ENCODE measurements at regions of chr7 and their contacts with region 1.

Region 1: DNA sequence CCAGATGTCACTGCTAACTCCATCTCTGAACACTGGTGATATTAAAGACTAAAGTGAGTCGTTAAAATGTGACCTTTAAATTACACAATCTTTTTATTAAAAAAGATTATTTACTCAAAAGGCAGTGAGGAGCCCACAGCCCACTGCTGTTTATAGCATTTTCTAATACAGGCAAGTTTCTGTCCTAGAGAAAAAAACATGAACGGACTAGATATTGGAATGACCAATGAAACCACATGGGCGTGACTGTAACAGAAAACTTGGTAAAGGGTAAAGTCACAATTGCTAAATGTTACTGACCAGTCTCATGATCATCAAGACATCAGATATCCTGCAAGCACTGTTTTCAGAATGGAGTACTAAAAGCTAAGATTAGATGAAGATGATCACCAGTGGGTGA is 78.7 kb downstream of the FEZF1 start:
- DNase-seq: no peak
- ATAC-seq: no peak
- H3K4me3 ChIP-seq: no peak overlapping the region
- H3K27ac ChIP-seq: no peak overlapping the region
- H3K4me1 ChIP-seq: no peaks in the 10 kb centered on the region
- H3K27me3 ChIP-seq: no peaks in the 10 kb centered on the region
- CTCF ChIP-seq: no peak
- POLR2A ChIP-seq: no peak

Region 2: GRCh38 chr7:122316467-122317388 is 90.9 kb after region 1 on chr7:
- intact Hi-C with region 1: no loop called
- DNase-seq: peak in 2 of 4 donors; percentile 24 to 38
- ATAC-seq: peak; percentile 60
- H3K4me3 ChIP-seq: no peak overlapping the region
- H3K27ac ChIP-seq: no peak overlapping the region
- H3K4me1 ChIP-seq: peaks cover 18% of the 10 kb centered on the region
- H3K27me3 ChIP-seq: peaks cover 0 to 13% of the 10 kb centered on the region in 2 donors
- CTCF ChIP-seq: no peak
- POLR2A ChIP-seq: no peak

Region 3: DNA sequence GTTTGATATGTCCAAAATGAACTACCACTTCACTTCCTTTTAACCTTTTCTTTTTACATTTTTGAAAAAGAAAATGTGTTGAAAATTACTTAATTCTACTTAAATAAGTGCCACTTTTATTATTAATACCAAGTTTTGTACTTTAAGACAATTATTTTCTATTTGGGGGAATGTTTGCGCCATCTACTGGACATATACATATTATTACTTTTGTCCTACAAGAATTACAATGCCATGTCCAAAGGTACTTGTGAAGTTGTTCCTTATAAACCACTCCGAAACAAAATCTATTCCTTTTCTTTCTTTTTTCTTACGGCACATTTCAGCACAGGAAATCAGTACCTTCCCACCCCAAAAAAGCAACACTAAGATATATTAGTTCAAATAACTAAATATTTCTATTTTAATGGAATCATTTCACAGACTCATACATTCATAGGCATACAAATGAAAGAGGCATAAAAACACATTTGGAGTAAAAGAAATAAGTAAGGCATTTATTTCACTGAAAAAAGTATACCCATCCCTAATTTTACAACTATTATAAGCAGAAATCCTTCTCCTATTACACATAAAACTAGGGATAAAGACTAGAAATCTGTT is 303.1 kb after region 1 on chr7:
- intact Hi-C with region 1: loop called (anchors 10 kb)
- DNase-seq: no peak
- ATAC-seq: no peak
- H3K4me3 ChIP-seq: no peak overlapping the region
- H3K27ac ChIP-seq: no peak overlapping the region
- H3K4me1 ChIP-seq: no peaks in the 10 kb centered on the region
- H3K27me3 ChIP-seq: no peaks in the 10 kb centered on the region
- CTCF ChIP-seq: peak; percentile 34 to 59 (median 54)
- POLR2A ChIP-seq: no peak

Measured in body of pancreas (tissue), 4 donors.